Sigmoid colon (tissue), 7 donors: ENCODE measurements at regions of chr15 and their contacts with region 1.

Region 1: DNA sequence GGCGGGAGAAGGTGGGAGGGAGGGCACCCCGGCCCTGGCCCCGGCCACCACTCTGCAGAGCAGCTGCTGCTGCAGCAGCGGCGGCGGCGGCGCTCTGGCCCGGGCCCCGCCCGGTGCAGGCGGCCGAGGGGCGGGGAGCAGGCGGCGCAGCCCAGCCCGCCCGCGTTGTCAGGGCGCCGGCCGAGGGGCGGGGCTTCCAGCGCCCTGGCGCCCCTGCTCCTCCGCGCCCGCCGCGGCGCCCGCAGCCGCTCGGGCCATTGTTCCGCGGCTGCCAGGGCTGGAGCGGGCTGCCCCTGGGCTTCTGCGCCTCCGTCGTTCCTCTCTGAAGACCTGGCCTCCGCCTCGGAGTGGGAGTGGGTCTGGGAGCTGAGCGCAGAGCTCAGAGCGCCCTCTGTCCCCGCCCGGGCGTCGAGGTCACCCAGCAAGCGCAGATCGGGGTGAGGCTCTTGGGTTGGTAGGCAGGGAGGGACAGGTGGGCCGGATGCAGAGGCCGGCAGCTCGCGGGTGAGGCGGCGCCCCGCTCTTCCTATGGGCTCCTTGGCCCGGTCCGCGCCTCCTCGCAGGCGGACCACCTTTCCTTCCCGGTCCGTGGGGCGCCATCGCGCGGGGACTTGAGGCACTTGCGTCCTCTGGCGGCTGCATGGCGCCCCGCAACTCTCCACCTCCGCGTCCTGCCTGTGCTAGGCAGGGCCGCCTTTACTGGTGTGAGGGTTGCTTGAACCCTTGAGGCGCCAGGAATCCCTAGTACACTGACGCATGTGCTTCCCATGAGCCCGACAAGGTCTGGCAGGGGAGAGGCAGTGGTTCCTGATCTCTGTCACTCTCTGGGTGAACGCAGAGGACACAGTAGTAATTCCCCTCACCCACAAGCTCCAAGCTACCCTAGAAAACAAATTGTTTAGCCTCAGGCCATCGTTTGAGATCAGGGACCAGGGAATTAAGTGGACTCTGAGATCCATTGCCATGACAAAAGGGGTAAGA is at the start of gene LPCAT4:
- DNase-seq: peak; percentile 94
- H3K4me3 ChIP-seq: peak within 1 kb of the TSS; percentile 86 to 90 (median 87)
- H3K27ac ChIP-seq: peak within 1 kb of the TSS; percentile 96 to 97 (median 97)
- H3K4me1 ChIP-seq: peaks cover 0 to 23% (median 19%) of the 10 kb centered on the region in 4 donors
- H3K27me3 ChIP-seq: no peaks in the 10 kb centered on the region
- CTCF ChIP-seq: peak; percentile 92 to 97 (median 96)
- EP300 ChIP-seq: no peak
- POLR2A ChIP-seq: peak; percentile 22 to 35
- total RNA-seq, gene LPCAT4: 9.6 to 25.2 (median 15.6) TPM

Region 2: GRCh38 chr15:34284937-34285336 is 82.5 kb before region 1 on chr15:
- intact Hi-C with region 1: no loop called
- DNase-seq: no peak
- H3K4me3 ChIP-seq: no peak overlapping the region
- H3K27ac ChIP-seq: no peak overlapping the region
- H3K4me1 ChIP-seq: no peaks in the 10 kb centered on the region
- H3K27me3 ChIP-seq: no peaks in the 10 kb centered on the region
- CTCF ChIP-seq: no peak
- EP300 ChIP-seq: no peak
- POLR2A ChIP-seq: no peak

Region 3: DNA sequence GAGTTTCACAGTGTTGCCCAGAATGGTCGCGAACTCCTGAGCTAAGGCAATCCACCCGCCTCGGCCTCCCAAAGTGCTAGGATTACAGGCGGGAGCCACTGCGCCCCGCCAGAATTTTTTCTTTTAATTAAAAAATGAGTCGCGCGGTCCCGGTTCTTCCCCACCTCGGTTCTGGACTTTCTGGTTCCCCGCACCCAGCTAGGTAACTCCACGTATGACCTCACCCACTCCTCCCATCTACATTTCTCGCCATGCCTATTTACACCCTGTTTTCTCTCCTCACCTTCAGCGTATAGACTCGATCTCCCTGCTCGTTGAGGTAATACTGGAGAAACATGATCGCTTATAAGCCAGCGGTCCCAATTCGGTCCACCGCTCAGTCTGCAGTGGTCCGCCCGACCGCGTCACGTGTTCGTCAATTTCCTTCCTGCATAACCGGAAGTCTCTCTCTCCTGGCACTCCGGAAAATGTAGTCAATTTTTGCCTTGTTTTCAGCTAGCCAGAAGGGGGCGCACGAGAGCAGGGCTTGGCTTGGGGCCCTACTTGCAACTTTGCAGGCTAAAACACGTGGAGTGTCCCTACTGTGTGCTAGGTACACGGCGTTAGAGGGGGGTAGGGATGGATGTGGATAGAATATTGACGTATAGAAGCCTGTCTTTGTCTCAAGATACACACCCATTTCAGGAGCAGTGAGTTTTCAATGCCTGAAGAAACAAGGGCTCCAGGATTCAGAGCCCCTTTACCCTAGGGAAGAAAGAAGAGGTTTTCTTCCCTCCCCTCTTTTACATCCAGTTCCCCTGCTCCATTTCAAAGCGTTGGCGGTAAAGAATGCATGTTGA is 24.4 kb before region 1 on chr15 and contains the starts of genes NOP10 and NUTM1:
- intact Hi-C with region 1: loop called (anchors 1 kb)
- DNase-seq: peak; percentile 94
- H3K4me3 ChIP-seq: peak within 1 kb of the TSS; percentile 53 to 70 (median 67)
- H3K27ac ChIP-seq: peak within 1 kb of the TSS; percentile 84 to 87 (median 86)
- H3K4me1 ChIP-seq: peaks cover 0 to 17% (median 11%) of the 10 kb centered on the region in 4 donors
- H3K27me3 ChIP-seq: no peaks in the 10 kb centered on the region
- CTCF ChIP-seq: peak; percentile 91 to 98 (median 96)
- EP300 ChIP-seq: no peak
- POLR2A ChIP-seq: peak; percentile 61 to 71
- total RNA-seq, gene NOP10: 67.6 to 160 (median 118) TPM
- total RNA-seq, gene NUTM1: not detected

Region 4: GRCh38 chr15:34483644-34484043 is 116.3 kb after region 1 on chr15:
- intact Hi-C with region 1: no loop called
- DNase-seq: no peak
- H3K4me3 ChIP-seq: no peak overlapping the region
- H3K27ac ChIP-seq: no peak overlapping the region
- H3K4me1 ChIP-seq: no peaks in the 10 kb centered on the region
- H3K27me3 ChIP-seq: no peaks in the 10 kb centered on the region
- CTCF ChIP-seq: no peak
- EP300 ChIP-seq: no peak
- POLR2A ChIP-seq: no peak